ENCODE measurements at regions of chr10 and their contacts with region 1.

Region 1: GRCh38 chr10:84421771-84422170 is 93.4 kb downstream of the CCSER2 start:
- DNase-seq: no peak
- H3K4me3 ChIP-seq: no peak overlapping the region
- H3K27ac ChIP-seq: no peak overlapping the region
- H3K4me1 ChIP-seq: no peaks in the 10 kb centered on the region
- H3K27me3 ChIP-seq: no peaks in the 10 kb centered on the region
- CTCF ChIP-seq: no peak
- POLR2A ChIP-seq: no peak

Region 2: GRCh38 chr10:83262434-83262833 is 1159.3 kb before region 1 on chr10:
- intact Hi-C with region 1: no loop called
- DNase-seq: no peak
- H3K4me3 ChIP-seq: no peak overlapping the region
- H3K27ac ChIP-seq: no peak overlapping the region
- H3K4me1 ChIP-seq: no peaks in the 10 kb centered on the region
- H3K27me3 ChIP-seq: no peaks in the 10 kb centered on the region
- CTCF ChIP-seq: no peak
- POLR2A ChIP-seq: no peak

Region 3: DNA sequence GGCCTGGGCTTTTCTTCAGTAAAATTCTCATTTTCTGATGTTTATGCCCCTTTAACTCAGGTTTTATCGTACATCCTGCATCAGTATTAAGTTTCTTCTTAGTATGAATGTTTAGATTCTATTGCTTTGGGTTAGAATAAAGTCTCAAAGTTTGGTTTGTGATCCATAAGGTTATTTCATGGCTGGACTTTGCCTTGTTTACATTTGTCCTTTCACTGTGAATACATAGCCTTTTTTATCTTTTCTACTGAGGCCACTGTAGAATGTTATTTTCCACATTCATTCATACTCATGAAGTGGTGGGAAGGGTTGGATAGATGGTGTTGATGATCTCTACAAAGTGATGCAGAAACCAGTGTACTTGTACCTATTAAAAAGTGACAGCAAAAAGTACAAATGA is 33.6 kb before region 1 on chr10:
- intact Hi-C with region 1: loop called (anchors 2 kb)
- DNase-seq: no peak
- H3K4me3 ChIP-seq: no peak overlapping the region
- H3K27ac ChIP-seq: no peak overlapping the region
- H3K4me1 ChIP-seq: no peaks in the 10 kb centered on the region
- H3K27me3 ChIP-seq: no peaks in the 10 kb centered on the region
- CTCF ChIP-seq: no peak
- POLR2A ChIP-seq: no peak

Region 4: GRCh38 chr10:84469470-84469869 is 47.7 kb after region 1 on chr10:
- intact Hi-C with region 1: no loop called
- DNase-seq: no peak
- H3K4me3 ChIP-seq: no peak overlapping the region
- H3K27ac ChIP-seq: no peak overlapping the region
- H3K4me1 ChIP-seq: no peaks in the 10 kb centered on the region
- H3K27me3 ChIP-seq: no peaks in the 10 kb centered on the region
- CTCF ChIP-seq: no peak
- POLR2A ChIP-seq: no peak

Measured in breast epithelium (tissue), 4 donors.